G401 (cell line): ENCODE measurements at regions of chr2 and their contacts with region 1.

Region 1: DNA sequence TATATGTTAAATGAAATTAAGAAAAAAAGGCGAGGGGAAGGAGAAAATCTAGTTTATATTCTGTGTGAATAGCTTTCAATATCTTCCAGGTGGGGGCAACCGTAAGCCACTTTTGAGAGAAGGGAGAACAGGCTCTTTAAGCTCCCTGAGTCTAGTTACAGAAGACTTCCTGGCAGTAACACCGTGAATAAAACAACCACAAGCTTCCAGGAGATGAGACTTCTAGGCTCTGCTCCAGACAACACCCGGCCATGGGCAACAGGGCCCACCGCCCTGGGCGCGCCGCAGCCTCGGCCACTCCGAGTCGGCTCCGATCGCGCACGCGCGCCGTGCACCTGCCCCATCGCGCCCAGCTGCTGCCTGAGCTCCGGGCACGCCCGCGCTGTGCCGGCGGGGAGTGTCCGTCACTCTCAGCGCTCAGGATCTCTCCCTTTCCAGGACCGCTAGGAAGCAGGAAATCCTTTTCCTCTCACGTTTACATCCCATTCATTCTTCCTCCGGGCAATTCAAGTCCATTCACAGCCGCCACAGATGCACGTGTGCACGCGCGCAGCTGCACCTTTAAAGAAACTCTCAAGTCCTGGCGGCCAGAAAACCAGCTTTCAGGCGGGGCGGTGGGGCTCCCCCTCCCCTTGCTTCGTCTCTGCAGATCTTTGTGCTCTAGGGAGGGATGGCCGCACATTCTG is 19.4 kb upstream of the PAX3 start:
- DNase-seq: peak; percentile 83

Region 2: GRCh38 chr2:222410534-222410933 is 92.4 kb after region 1 on chr2:
- in situ Hi-C with region 1: no loop called
- DNase-seq: no peak

Region 3: GRCh38 chr2:222613715-222614331 is 295.7 kb after region 1 on chr2:
- in situ Hi-C with region 1: loop called (anchors 25 kb)
- DNase-seq: peak; percentile 75